Left ventricle myocardium superior (tissue), 1 donor: ENCODE measurements at regions of chr14 and their contacts with region 1.

Region 1: GRCh38 chr14:70816525-70816924 is 7.2 kb upstream of the MAP3K9 start:
- DNase-seq: no peak
- ATAC-seq: no peak

Region 2: DNA sequence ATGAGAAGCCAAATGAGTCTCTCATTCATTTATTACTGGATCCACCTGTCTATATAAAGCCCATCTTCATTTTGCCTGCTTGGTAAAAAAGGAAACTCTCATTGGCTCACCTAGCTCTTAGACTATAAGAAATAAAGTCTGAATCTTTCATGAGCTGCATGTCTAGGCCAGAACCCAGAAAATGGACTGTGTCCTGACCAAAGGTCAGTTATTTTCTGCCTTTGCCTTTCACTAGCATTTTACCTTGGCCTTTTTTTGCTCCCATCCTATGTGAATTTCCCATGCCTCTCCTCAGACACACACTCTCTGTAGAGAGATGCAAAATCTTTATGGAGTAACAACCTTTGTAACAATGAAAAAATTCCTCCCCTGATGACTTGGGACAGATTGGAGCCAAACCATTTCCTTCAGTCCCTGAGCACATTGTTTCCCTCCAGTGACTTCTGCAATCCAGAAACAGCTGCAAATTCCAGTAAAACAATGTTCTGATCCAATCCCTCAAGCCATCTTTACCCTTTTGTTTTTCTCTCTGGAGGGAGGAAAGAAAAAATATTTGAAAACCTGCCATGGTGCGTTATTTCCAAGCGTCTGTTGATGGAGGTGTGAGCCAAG is 26.4 kb after region 1 on chr14:
- intact Hi-C with region 1: no loop called
- DNase-seq: no peak
- ATAC-seq: peak; percentile 74

Region 3: DNA sequence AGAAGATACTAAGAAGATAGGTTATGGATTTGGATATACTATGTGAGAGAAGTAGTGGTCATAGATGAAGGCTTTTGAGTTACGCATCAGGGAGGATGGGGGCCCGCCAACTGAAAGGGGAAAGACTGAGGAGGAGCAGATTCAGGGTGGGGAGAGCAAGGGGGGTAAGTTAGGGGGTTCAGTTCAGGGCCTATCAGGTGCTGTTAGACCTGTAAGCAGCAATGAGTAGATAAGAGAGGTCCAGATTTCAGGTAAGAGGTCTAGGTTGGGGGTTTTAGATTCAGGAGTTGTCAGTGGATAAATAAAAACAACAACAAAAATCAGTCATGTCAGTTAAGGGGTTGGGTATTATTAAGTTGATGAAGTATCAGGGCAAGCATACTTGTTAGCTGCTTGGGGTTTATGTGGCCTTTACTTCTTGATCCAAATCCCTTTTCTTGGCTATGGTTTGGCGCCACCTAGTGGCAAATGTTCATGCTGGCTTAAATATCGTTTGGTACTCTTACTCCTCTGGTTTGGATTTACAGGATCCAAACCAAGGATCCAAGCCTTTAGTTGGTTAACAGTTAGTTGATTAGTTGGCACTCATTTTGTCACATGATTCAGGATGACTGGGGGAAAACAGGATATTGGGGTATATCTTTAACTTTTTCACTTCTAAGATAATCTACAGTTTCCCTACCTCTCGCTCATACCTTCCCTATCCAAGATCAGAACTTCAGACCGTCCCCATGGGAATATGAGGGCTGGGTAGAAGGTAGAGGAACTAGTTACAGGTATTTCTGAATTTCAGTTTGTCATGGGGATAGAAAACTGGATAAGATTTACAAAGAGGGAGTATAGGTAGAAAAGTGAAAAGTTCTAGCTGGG is 155.8 kb after region 1 on chr14:
- intact Hi-C with region 1: loop called (anchors 5 kb)
- DNase-seq: peak; percentile 77
- ATAC-seq: peak; percentile 90

Region 4: DNA sequence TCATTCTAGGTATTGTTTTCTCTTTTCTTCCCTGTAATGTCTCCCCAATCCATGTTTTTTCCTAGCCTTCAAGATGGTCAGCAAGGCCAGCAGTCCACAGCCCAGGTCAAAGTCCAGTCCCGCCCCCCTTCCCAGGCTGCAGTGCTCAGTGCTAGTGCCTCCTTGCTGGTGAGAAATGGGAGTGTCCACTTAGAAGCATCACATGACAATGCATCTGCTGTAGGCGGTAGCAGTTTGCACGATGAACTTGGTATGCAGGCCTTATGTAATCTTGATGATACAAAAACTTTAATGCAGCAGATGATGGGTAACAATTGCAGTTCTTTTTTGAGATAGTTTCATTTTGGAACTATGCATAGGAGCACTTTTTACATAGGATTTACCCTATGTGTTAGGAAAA is 179.2 kb after region 1 on chr14:
- intact Hi-C with region 1: no loop called
- DNase-seq: no peak
- ATAC-seq: no peak